ENCODE measurements at regions of chr12 and their contacts with region 1.

Region 1: GRCh38 chr12:52192173-52192791 is 468 bp upstream of the KRT80 start:
- DNase-seq: peak; percentile 98
- H3K4me3 Mint-ChIP-seq: no peak overlapping the region
- H3K27ac Mint-ChIP-seq: peak overlapping the region; percentile 94
- H3K4me1 Mint-ChIP-seq: peaks cover 48% of the 10 kb centered on the region
- H3K27me3 Mint-ChIP-seq: no peaks in the 10 kb centered on the region
- CTCF ChIP-seq: no peak

Region 2: DNA sequence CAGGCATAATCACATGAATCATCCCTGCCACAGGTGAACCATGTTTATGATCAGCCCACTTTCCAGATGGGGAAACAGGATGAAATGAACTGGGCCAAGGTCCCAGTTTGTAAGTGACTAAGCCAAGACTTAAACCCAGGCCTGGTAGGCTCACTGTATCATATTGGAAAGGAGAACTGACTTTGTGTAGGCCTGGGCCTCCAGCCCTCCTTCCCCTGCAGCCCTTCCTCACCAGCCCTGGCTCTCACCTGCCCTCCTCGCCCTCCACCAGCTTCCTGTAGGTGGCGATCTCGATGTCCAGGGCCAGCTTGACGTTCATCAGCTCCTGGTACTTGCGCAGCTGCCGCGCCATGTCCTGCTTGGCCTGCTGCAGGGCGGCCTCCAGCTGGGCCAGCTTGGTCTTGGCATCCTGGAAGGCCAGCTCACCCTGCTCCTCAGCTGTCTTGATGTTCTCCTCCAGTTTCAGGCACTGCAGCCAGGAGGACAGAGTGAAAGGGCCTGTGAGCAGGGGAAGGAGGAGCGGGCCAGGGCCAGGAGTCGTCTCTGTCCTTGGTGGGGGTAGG is 20.3 kb before region 1 on chr12:
- CTCF ChIA-PET with region 1: interaction called, 6 read pairs
- POLR2A ChIA-PET with region 1: interaction called, 43 read pairs
- intact Hi-C with region 1: no loop called
- DNase-seq: peak; percentile 80
- H3K4me3 Mint-ChIP-seq: no peak overlapping the region
- H3K27ac Mint-ChIP-seq: peak overlapping the region; percentile 64
- H3K4me1 Mint-ChIP-seq: peaks cover 45% of the 10 kb centered on the region
- H3K27me3 Mint-ChIP-seq: no peaks in the 10 kb centered on the region
- CTCF ChIP-seq: peak; percentile 39

Region 3: GRCh38 chr12:52181746-52182145 is 10.5 kb before region 1 on chr12:
- CTCF ChIA-PET with region 1: interaction called, 3 read pairs
- POLR2A ChIA-PET with region 1: interaction called, 43 read pairs
- intact Hi-C with region 1: no loop called
- DNase-seq: peak; percentile 84
- H3K4me3 Mint-ChIP-seq: no peak overlapping the region
- H3K27ac Mint-ChIP-seq: no peak overlapping the region
- H3K4me1 Mint-ChIP-seq: peaks cover 56% of the 10 kb centered on the region
- H3K27me3 Mint-ChIP-seq: no peaks in the 10 kb centered on the region
- CTCF ChIP-seq: no peak

Region 4: GRCh38 chr12:52202361-52203074 is 10.2 kb after region 1 on chr12:
- CTCF ChIA-PET with region 1: interaction called, 9 read pairs
- POLR2A ChIA-PET with region 1: interaction called, 10 read pairs
- intact Hi-C with region 1: no loop called
- DNase-seq: no peak
- H3K4me3 Mint-ChIP-seq: no peak overlapping the region
- H3K27ac Mint-ChIP-seq: peak overlapping the region; percentile 68
- H3K4me1 Mint-ChIP-seq: peaks cover 50% of the 10 kb centered on the region
- H3K27me3 Mint-ChIP-seq: no peaks in the 10 kb centered on the region
- CTCF ChIP-seq: no peak

Region 5: DNA sequence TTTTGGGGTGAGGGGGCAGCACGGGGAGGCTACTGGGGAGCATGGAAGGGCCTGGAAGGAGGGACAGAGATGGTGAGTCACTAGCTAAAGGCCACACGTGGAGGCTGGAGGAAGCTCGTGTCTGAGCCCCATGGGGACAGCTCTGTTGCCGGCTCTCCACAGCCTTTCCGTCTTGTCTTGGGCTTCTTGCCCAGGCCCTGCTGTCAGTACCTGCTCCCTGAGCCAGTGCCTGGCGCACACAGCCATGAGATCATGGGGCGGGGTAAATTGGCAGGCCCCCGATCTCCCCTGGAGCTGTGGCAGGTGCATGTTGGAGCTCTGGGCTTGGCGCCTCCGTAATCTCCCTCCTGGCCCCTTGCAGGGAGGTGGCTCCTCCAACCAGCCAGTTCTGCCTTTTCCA is 15.6 kb after region 1 on chr12:
- CTCF ChIA-PET with region 1: interaction called, 9 read pairs
- POLR2A ChIA-PET with region 1: interaction called, 16 read pairs
- intact Hi-C with region 1: no loop called
- DNase-seq: peak; percentile 87
- H3K4me3 Mint-ChIP-seq: no peak overlapping the region
- H3K27ac Mint-ChIP-seq: peak overlapping the region; percentile 61
- H3K4me1 Mint-ChIP-seq: peaks cover 68% of the 10 kb centered on the region
- H3K27me3 Mint-ChIP-seq: no peaks in the 10 kb centered on the region
- CTCF ChIP-seq: no peak